ENCODE measurements at regions of chr12 and their contacts with region 1.

Region 1: DNA sequence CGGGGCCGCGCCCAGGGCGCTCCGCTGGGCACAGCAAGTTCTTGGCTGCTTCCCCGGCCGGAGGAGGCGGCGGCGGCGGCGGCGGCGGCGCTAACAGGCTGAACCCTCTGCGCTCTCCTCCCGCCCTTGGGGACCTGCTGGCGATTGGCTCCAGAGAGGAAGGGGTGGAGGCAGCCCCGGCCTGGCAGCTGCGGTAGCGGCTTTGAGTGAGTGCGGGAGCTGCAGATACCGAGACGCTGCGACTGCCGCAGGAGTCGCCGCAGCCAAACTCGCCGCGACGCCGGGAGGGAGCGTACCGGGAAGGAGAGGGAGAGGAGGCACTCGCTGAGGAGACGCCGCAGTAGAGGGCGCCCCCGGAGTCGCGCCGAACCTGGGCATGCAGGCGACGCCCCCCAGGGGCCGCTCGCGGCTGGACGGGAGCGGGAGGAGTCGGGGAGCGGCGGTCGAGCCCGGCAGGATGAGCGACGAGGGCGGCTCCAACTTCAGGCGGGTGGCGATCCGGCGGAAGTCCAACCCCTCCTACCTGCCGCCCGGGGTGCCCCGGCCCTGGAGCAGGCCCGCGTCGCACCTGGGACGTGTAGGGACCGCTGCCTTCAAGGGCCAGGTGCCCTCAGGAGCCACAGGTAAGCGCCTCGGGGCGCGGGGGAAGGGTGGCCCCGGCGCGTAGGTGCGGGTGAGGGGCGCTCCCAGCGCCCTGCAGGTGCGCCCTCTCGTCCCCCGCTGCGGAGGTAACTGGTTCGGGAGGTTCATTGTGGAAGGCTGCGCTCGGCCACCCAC is at the start of gene FGD4:
- DNase-seq: peak; percentile 57 to 89
- H3K4me3 ChIP-seq: peak within 1 kb of the TSS; percentile 85 to 89
- H3K27ac ChIP-seq: peak within 1 kb of the TSS; percentile 34 to 73
- H3K4me1 ChIP-seq: no peaks in the 10 kb centered on the region
- H3K27me3 ChIP-seq: no peaks in the 10 kb centered on the region
- CTCF ChIP-seq: peak in 2 of 3 experiments; percentile 37 to 52
- total RNA-seq, gene FGD4: 47.5 TPM

Region 2: DNA sequence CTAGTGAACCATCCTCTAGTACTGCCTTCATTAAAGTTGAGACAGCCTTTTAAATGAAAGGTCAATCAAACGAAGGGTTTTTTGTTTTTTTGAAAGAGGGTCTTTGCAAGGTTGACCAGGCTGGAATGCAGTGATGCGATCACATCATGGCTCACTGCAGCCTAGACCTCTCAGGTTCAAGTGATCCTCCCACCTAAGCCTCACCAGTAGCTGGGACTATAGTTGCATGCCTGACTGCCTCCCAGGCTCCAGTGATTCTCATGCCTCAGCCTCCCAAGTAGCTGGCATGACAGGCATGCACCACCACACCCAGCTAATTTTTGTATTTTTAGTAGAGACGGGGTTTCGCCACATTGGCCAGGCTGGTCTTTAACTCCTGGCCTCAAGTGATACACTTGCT is 958.9 kb before region 1 on chr12:
- intact Hi-C with region 1: no loop called
- DNase-seq: no peak
- H3K4me3 ChIP-seq: no peak overlapping the region
- H3K27ac ChIP-seq: no peak overlapping the region
- H3K4me1 ChIP-seq: no peaks in the 10 kb centered on the region
- H3K27me3 ChIP-seq: no peaks in the 10 kb centered on the region
- CTCF ChIP-seq: no peak

Region 3: DNA sequence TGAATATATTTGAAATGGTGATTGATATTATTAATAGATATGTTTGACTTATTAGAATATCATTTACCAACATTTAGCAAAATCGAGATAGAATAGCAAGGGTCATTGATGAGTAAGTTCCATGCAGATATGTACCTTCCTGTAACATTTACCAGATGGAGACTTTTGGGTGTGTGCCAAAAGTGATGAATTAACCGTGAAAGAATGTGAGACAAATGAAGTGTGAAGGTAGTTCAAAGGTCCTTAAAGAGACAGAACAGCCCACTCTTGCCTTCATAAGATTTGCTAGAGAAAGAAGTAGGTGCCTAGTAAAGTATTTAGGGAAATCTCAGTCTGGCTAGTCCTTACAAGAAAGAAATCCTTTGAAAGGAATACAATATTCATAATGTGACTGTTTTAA is 45.4 kb after region 1 on chr12:
- intact Hi-C with region 1: loop called (anchors 5 kb)
- DNase-seq: no peak
- H3K4me3 ChIP-seq: no peak overlapping the region
- H3K27ac ChIP-seq: no peak overlapping the region
- H3K4me1 ChIP-seq: no peaks in the 10 kb centered on the region
- H3K27me3 ChIP-seq: no peaks in the 10 kb centered on the region
- CTCF ChIP-seq: no peak

Region 4: DNA sequence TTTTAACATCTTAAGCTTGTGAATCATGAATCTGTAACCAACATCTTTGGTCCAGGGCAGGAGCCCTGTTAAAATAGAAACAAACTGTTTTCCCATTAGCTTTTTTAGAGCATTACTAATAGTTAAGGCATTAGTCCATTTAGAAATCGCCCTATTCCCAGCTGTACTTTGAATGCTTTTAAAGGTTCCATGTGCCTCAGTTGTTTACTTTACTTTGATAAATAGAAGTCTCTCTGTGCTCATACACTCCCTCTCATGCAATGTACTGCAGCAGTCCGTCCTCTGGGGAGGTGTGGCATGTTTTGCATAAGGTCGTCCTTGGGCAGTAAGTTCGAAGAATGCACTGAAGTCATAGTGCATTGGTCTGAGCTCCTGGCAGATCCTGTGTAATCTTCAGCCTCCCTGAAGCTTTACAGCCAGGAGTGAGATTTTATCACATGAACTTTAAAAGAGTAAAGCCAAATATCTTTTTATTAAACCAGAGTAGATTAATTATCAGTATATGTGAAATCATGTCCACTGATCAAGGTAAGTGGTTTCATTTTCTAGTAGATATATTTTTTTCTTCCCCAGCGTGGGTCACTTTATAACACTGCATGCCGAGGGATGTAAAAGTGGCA is 134.6 kb after region 1 on chr12:
- intact Hi-C with region 1: loop called (anchors 10 kb)
- DNase-seq: peak in 1 of 2 donors; percentile 90
- H3K4me3 ChIP-seq: peak overlapping the region; percentile 48 to 67
- H3K27ac ChIP-seq: peak overlapping the region; percentile 74 to 85
- H3K4me1 ChIP-seq: peaks cover 6 to 28% of the 10 kb centered on the region in 2 donors
- H3K27me3 ChIP-seq: no peaks in the 10 kb centered on the region
- CTCF ChIP-seq: no peak